GM13976 (cell line): ENCODE measurements at regions of chrX and their contacts with region 1.

Region 1: GRCh38 chrX:66728818-66729271 is 90.0 kb upstream of the EDA2R start:
- DNase-seq: peak; percentile 21
- CTCF ChIP-seq: peak; percentile 49

Region 2: GRCh38 chrX:66015152-66015831 is 713.6 kb before region 1 on chrX:
- in situ Hi-C with region 1: loop called (anchors 25 kb)
- DNase-seq: no peak
- CTCF ChIP-seq: no peak